Activated naive CD4-positive, alpha-beta T cell treated with anti-CD3 and anti-CD28 coated beads, Interleukin-2, amount 10 ng/mL, durations not matched to agents 7 days and 5 days (primary cell): ENCODE measurements at regions of chr2 and their contacts with region 1.

Region 1: GRCh38 chr2:233857511-233858141 is 3.3 kb upstream of the HJURP start:
- DNase-seq: peak; percentile 73
- H3K4me3 Mint-ChIP-seq: no peak overlapping the region
- H3K27ac Mint-ChIP-seq: no peak overlapping the region
- H3K4me1 Mint-ChIP-seq: peaks cover 33% of the 10 kb centered on the region
- H3K27me3 Mint-ChIP-seq: peaks cover 15% of the 10 kb centered on the region

Region 2: GRCh38 chr2:233801357-233802131 is 56.1 kb before region 1 on chr2:
- CTCF ChIA-PET with region 1: no interaction called
- DNase-seq: peak; percentile 34
- H3K4me3 Mint-ChIP-seq: no peak overlapping the region
- H3K27ac Mint-ChIP-seq: no peak overlapping the region
- H3K4me1 Mint-ChIP-seq: no peaks in the 10 kb centered on the region
- H3K27me3 Mint-ChIP-seq: peaks cover 32% of the 10 kb centered on the region

Region 3: GRCh38 chr2:233846387-233847247 is 11.0 kb before region 1 on chr2:
- CTCF ChIA-PET with region 1: interaction called, 12 read pairs
- DNase-seq: no peak
- H3K4me3 Mint-ChIP-seq: no peak overlapping the region
- H3K27ac Mint-ChIP-seq: peak overlapping the region; percentile 37
- H3K4me1 Mint-ChIP-seq: peaks cover 55% of the 10 kb centered on the region
- H3K27me3 Mint-ChIP-seq: no peaks in the 10 kb centered on the region

Region 4: GRCh38 chr2:233917116-233917515 is 59.5 kb after region 1 on chr2 and contains the start of gene TRPM8:
- CTCF ChIA-PET with region 1: interaction called, 10 read pairs
- DNase-seq: no peak
- H3K4me3 Mint-ChIP-seq: no peak within 1 kb of the TSS
- H3K27ac Mint-ChIP-seq: no peak within 1 kb of the TSS
- H3K4me1 Mint-ChIP-seq: peaks cover 2% of the 10 kb centered on the region
- H3K27me3 Mint-ChIP-seq: peaks cover 28% of the 10 kb centered on the region